ENCODE measurements at regions of chr12 and their contacts with region 1.

Region 1: GRCh38 chr12:47014474-47014873 is 64.9 kb upstream of the PCED1B start:
- DNase-seq: no peak
- H3K4me3 ChIP-seq: no peak overlapping the region
- H3K4me3 Mint-ChIP-seq: no peak overlapping the region
- H3K27ac ChIP-seq: no peak overlapping the region
- H3K27ac Mint-ChIP-seq: no peak overlapping the region
- H3K4me1 ChIP-seq: no peaks in the 10 kb centered on the region
- H3K4me1 Mint-ChIP-seq: peaks cover 10% of the 10 kb centered on the region
- H3K27me3 ChIP-seq: no peaks in the 10 kb centered on the region
- H3K27me3 Mint-ChIP-seq: peaks cover 0 to 3% (median 0%) of the 10 kb centered on the region in 3 donors
- CTCF ChIP-seq: no peak

Region 2: DNA sequence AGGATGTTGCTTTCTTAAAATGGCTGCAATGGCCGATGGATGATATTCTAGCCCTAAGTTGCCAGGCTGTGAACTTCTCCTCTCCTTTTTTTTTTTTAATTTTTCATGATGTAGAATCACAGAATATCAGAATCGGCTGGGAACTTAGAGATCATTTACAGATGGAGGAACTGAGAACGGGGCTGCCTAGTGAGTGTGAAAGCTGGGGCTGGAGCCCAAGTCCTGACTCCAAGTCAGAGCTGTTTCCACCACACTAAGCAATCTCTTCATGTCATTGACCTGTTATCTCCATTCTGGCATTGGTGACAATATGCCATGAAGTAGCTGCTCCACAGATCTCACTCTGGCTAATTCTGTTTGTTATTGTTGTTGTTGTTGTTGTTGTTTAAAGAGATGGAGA is 867.3 kb before region 1 on chr12:
- intact Hi-C with region 1: no loop called
- DNase-seq: no peak
- H3K4me3 ChIP-seq: no peak overlapping the region
- H3K4me3 Mint-ChIP-seq: no peak overlapping the region
- H3K27ac ChIP-seq: no peak overlapping the region
- H3K27ac Mint-ChIP-seq: no peak overlapping the region
- H3K4me1 ChIP-seq: no peaks in the 10 kb centered on the region
- H3K4me1 Mint-ChIP-seq: peaks cover 3% of the 10 kb centered on the region
- H3K27me3 ChIP-seq: no peaks in the 10 kb centered on the region
- H3K27me3 Mint-ChIP-seq: peaks cover 0 to 2% (median 0%) of the 10 kb centered on the region in 3 donors
- CTCF ChIP-seq: no peak

Region 3: DNA sequence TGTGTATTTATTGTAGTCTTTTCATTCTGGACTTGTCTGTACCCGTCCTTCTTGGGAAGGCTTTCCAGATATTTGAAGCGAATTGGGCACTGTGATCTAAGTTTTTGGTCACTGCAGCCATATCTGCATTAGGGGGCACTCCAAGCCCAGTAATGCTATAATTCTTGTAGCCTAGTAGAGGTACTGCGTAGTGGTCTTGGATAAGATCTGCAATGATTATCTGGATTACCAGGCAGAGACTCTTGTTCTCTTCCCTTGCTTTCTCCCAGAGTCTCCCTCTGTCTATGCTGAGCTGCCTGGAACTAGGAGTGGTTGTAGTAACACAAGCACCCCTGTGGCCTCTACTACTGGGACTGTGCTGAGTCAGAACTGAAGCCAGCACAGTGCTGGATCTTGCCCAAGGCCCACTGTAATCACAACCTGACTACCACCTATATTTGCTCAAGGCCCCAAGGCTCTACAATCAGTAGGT is 671.9 kb before region 1 on chr12:
- intact Hi-C with region 1: loop called in 1 of 2 experiments (anchors 10 kb)
- DNase-seq: peak in 2 of 3 donors; percentile 30 to 42
- H3K4me3 ChIP-seq: no peak overlapping the region
- H3K4me3 Mint-ChIP-seq: no peak overlapping the region
- H3K27ac ChIP-seq: no peak overlapping the region
- H3K27ac Mint-ChIP-seq: no peak overlapping the region
- H3K4me1 ChIP-seq: no peaks in the 10 kb centered on the region
- H3K4me1 Mint-ChIP-seq: no peaks in the 10 kb centered on the region
- H3K27me3 ChIP-seq: no peaks in the 10 kb centered on the region
- H3K27me3 Mint-ChIP-seq: peaks cover 0 to 4% (median 2%) of the 10 kb centered on the region in 3 donors
- CTCF ChIP-seq: peak; percentile 61